Naive thymus-derived CD4-positive, alpha-beta T cell (primary cell): ENCODE measurements at regions of chr12 and their contacts with region 1.

Region 1: DNA sequence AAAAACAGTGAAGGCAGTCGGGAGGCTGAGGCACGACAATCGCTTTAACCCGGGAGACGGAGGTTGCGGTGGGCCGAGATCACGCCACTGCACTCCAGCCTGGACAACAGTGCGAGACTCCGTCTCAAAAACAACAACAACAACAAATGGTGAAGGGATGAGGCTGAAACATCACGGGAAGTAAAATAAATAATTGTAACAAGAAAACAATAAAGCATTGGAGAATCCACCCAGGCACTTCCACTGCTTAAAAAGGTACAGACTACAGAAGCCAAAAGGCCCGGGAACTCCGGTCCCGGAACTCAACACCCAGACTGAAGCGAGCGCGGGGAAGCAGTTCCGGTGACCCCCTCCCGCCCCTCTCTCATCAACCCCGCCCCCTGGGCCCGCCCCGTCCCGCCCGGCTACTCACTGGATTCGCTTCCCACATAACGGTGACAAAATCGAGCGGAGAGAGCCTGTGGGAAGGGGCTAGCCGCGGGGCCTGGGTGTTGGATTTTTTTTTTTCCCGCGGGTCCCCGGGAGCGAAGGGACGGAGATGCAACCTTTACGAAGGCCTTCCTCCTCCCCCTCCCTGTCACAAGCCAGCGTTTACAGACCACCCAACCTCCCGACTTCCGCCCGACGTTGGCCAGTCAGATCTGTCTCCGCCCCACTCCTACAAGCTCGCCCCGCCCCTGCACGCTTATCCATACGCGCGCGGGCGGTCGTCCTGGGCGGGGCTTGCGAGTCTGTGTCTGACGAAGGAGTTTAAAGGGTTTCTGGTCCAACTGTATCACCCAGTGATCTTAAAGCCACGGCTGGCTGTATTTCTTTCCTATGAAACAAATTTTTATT is at the start of gene PARP11:
- DNase-seq: peak; percentile 93 to 98 (median 96)
- ATAC-seq: peak; percentile 98
- H3K4me3 ChIP-seq: peak within 1 kb of the TSS; percentile 93
- H3K4me3 Mint-ChIP-seq: peak within 1 kb of the TSS; percentile 90 to 99 (median 94)
- H3K27ac ChIP-seq: peak within 1 kb of the TSS; percentile 96
- H3K27ac Mint-ChIP-seq: peak within 1 kb of the TSS; percentile 95 to 99 (median 98)
- H3K4me1 ChIP-seq: peaks cover 23 to 32% of the 10 kb centered on the region in 2 donors
- H3K4me1 Mint-ChIP-seq: peaks cover 31 to 58% (median 55%) of the 10 kb centered on the region in 7 donors
- H3K27me3 ChIP-seq: no peaks in the 10 kb centered on the region
- H3K27me3 Mint-ChIP-seq: peaks cover 0 to 6% (median 0%) of the 10 kb centered on the region in 5 donors
- total RNA-seq, gene PARP11: 21.5 to 37.4 (median 35.1) TPM

Region 2: GRCh38 chr12:2890388-2891239 is 982.4 kb before region 1 on chr12 and contains the start of gene TULP3:
- CTCF ChIA-PET with region 1: no interaction called
- POLR2A ChIA-PET with region 1: no interaction called
- intact Hi-C with region 1: loop called in 1 of 2 experiments (anchors 5 kb)
- DNase-seq: peak; percentile 95 to 98 (median 97)
- ATAC-seq: peak; percentile 99
- H3K4me3 ChIP-seq: peak within 1 kb of the TSS; percentile 96
- H3K4me3 Mint-ChIP-seq: peak within 1 kb of the TSS; percentile 93 to 100 (median 98)
- H3K27ac ChIP-seq: peak within 1 kb of the TSS; percentile 89
- H3K27ac Mint-ChIP-seq: peak within 1 kb of the TSS; percentile 81 to 97 (median 97)
- H3K4me1 ChIP-seq: peaks cover 3 to 8% of the 10 kb centered on the region in 2 donors
- H3K4me1 Mint-ChIP-seq: peaks cover 15 to 35% (median 31%) of the 10 kb centered on the region in 7 donors
- H3K27me3 ChIP-seq: no peaks in the 10 kb centered on the region
- H3K27me3 Mint-ChIP-seq: peaks cover 0 to 2% (median 0%) of the 10 kb centered on the region in 5 donors
- total RNA-seq, gene TULP3: 4.7 to 9.6 (median 7.4) TPM

Region 3: GRCh38 chr12:4030929-4031702 is 158.1 kb after region 1 on chr12:
- CTCF ChIA-PET with region 1: no interaction called
- POLR2A ChIA-PET with region 1: interaction called, 4 read pairs
- intact Hi-C with region 1: loop called in 1 of 2 experiments (anchors 1 kb)
- DNase-seq: peak; percentile 62 to 83 (median 74)
- ATAC-seq: peak; percentile 95
- H3K4me3 ChIP-seq: peak overlapping the region; percentile 50
- H3K4me3 Mint-ChIP-seq: peak overlapping the region; percentile 60 to 87 (median 84)
- H3K27ac ChIP-seq: peak overlapping the region; percentile 75
- H3K27ac Mint-ChIP-seq: peak overlapping the region in 8 of 9 donors; percentile 60 to 92 (median 86)
- H3K4me1 ChIP-seq: peaks cover 13 to 33% of the 10 kb centered on the region in 2 donors
- H3K4me1 Mint-ChIP-seq: peaks cover 22 to 54% (median 47%) of the 10 kb centered on the region in 7 donors
- H3K27me3 ChIP-seq: no peaks in the 10 kb centered on the region
- H3K27me3 Mint-ChIP-seq: peaks cover 0 to 33% (median 0%) of the 10 kb centered on the region in 5 donors

Region 4: DNA sequence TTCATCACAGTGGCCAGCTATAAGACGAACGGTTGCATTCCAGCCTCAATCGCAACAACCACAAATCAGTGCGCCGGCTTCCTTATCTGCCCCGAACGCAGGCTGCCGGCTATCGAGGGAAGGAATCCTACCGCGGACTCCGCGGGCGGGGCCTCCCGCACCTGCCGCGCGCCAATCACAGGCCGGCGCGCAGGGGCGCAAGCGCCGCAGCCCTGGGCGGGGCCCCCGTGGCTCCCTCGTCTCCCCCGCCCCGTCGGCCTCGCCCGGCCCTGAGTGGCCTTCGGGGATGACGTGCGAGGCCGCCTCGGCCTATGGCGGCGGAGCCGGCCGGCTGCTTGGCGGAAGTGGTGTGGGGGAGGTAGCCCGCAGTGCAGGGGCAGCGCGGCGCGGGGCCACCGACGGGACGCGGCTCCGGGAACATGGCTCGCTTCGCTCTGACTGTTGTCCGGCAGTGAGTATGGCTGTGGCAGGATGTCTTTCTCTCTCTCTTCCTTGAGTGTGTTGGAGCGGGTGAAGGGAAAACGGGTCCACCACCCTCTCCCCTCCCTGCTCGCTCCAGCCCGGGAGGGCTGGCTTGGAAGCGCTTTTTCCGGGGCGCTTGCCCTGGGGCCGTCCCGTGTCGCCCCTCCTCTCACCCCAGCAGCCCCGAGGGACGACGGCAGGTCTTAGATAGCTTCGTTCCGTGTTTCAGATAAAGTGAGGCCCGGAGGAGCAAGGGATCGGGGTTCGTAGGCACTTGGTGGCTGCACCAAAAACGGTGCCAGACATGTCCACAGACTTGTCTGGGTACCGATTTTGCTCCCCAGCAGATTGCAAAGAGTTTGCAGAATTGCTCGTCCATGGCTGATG is 448.1 kb after region 1 on chr12 and contains the start of gene TIGAR:
- CTCF ChIA-PET with region 1: no interaction called
- POLR2A ChIA-PET with region 1: no interaction called
- intact Hi-C with region 1: loop called (anchors 1 kb)
- DNase-seq: peak; percentile 86 to 97 (median 90)
- ATAC-seq: peak; percentile 99
- H3K4me3 ChIP-seq: peak within 1 kb of the TSS; percentile 85
- H3K4me3 Mint-ChIP-seq: peak within 1 kb of the TSS; percentile 83 to 97 (median 95)
- H3K27ac ChIP-seq: peak within 1 kb of the TSS; percentile 84
- H3K27ac Mint-ChIP-seq: peak within 1 kb of the TSS; percentile 74 to 96 (median 92)
- H3K4me1 ChIP-seq: peaks cover 14 to 15% of the 10 kb centered on the region in 2 donors
- H3K4me1 Mint-ChIP-seq: peaks cover 21 to 53% (median 46%) of the 10 kb centered on the region in 7 donors
- H3K27me3 ChIP-seq: no peaks in the 10 kb centered on the region
- H3K27me3 Mint-ChIP-seq: no peaks in the 10 kb centered on the region
- total RNA-seq, gene TIGAR: 7.1 to 15.8 (median 11.1) TPM

Region 5: DNA sequence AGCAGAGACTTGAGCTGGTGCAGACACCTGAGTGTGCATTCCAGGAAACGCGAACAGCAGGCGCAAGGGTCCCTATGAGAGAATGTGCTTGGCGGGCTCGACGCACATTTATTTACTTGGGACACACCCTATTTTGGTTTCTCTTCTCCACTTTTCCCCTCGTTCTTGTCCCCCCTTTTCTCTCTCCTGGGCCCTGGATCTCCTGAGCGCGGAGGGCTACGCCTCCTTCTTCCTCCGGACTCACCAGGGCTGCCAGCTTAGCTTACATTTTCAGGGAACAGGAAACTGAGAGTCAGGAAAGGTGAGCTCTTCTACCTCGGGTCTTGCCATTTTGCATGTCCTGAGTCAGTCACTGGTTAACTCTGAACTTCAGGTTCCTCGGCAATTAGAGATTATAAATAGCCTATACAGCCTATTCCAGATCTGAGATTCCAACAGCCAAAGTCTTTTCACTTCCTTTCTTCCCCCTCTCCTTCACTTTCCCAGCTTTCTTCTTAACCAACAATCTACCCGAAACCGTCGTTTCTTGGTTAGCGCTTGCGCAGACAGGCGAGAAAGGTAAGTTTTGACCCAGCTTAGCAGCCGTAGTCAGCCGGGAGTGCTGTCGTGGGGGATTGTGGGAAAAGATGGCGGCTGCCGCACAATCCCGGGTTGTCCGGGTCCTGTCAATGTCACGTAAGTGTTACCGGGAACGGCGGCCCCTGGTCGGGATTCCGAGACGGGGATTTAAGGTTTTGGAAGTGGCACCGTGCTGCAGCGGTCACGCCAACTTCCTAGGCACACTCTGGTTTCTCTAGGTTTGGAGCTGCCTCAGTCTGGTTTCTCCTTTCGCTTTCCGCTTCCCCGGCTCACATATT is 775.7 kb after region 1 on chr12 and contains the starts of genes AKAP3 and NDUFA9:
- CTCF ChIA-PET with region 1: no interaction called
- POLR2A ChIA-PET with region 1: no interaction called
- intact Hi-C with region 1: loop called (anchors 2 kb)
- DNase-seq: peak; percentile 53 to 87 (median 84)
- ATAC-seq: peak; percentile 97
- H3K4me3 ChIP-seq: peak within 1 kb of the TSS; percentile 92
- H3K4me3 Mint-ChIP-seq: peak within 1 kb of the TSS; percentile 88 to 99 (median 97)
- H3K27ac ChIP-seq: peak within 1 kb of the TSS; percentile 80
- H3K27ac Mint-ChIP-seq: peak within 1 kb of the TSS; percentile 90 to 99 (median 95)
- H3K4me1 ChIP-seq: peaks cover 14 to 15% of the 10 kb centered on the region in 2 donors
- H3K4me1 Mint-ChIP-seq: peaks cover 24 to 58% (median 46%) of the 10 kb centered on the region in 7 donors
- H3K27me3 ChIP-seq: no peaks in the 10 kb centered on the region
- H3K27me3 Mint-ChIP-seq: peaks cover 0 to 13% (median 0%) of the 10 kb centered on the region in 5 donors
- total RNA-seq, gene AKAP3: 1.2 to 6.9 (median 2.5) TPM
- total RNA-seq, gene NDUFA9: 55.5 to 103 (median 58.2) TPM